CD8-positive, alpha-beta T cell (primary cell): ENCODE measurements at regions of chr7 and their contacts with region 1.

Region 1: DNA sequence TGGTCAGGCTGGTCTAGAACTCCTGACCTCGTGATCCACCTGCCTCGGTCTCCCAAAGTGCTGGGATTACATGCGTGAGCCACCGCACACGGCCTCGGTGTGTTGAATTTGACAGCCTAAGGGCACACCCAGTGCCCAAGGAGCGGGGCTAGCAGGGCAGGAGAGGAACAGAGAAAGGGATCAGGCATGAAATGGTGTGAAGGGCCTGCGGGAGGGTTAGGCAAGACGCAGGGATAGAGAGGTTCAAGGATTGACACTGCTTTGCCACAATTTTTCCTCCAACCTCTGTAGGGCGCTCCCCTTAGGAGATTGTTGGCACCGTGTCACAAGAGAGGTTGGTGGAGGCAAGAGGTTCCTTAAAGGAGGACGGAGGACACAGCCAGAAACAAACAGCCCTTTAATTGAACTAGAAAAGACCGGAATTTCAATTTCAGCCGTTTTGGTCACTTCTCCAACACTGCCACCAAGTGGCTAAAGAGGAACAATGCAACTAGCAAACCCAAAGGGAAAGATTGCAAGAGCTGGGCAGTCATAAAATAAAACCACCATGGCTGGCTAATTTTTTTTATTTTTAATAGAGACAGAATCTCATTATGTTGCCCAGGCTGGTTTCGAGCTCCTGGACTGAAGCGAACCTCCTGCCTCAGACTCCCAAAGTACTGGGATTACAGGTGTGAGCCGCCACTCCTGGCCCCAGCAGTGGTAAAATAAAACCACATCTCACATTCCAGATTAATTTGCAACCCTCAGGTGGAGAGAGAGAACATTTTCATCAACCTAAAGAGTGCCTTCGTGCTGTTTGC is 6.9 kb upstream of the CREB3L2 start:
- DNase-seq: peak in 7 of 9 experiments; percentile 9 to 71 (median 22)
- ATAC-seq: peak; percentile 77
- H3K4me3 ChIP-seq: no peak overlapping the region
- H3K4me3 Mint-ChIP-seq: no peak overlapping the region
- H3K27ac ChIP-seq: no peak overlapping the region
- H3K27ac Mint-ChIP-seq: no peak overlapping the region
- H3K4me1 ChIP-seq: no peaks in the 10 kb centered on the region
- H3K4me1 Mint-ChIP-seq: no peaks in the 10 kb centered on the region
- H3K27me3 ChIP-seq: no peaks in the 10 kb centered on the region
- H3K27me3 Mint-ChIP-seq: peaks cover 3% of the 10 kb centered on the region
- CTCF ChIP-seq: peak; percentile 96

Region 2: DNA sequence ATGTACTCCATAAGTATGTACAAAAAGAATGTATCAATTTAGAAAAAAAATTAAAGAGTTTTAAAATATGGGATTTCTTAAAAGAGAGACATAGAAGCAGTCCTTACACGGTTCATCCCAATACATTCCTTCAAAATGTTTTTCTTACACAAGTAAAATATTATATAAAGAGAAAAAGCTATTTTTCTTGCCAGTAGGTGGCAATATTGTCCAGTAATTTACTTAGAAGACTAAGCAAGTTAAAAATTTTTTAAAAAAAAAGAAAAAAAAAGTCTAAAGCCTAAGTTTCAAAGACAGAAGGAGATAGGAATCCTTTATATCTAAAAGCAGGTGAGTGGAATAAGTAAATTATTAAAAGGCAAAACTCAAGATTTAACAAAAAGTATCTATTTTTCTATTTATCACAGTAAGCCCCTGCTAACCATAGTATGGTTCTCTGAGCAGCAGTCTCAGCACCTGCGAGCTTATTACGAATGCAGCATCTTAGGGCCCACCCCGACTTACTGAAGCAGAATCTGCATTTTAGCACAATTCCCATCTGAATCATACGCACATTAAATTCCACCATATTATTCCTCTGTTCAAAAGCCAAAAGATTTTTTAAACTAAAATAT is 402.6 kb before region 1 on chr7:
- CTCF ChIA-PET with region 1: no interaction called
- POLR2A ChIA-PET with region 1: no interaction called
- intact Hi-C with region 1: loop called in 1 of 2 experiments (anchors 5 kb)
- DNase-seq: peak in 2 of 9 experiments; percentile 11 to 31
- ATAC-seq: no peak
- H3K4me3 ChIP-seq: no peak overlapping the region
- H3K4me3 Mint-ChIP-seq: no peak overlapping the region
- H3K27ac ChIP-seq: no peak overlapping the region
- H3K27ac Mint-ChIP-seq: no peak overlapping the region
- H3K4me1 ChIP-seq: no peaks in the 10 kb centered on the region
- H3K4me1 Mint-ChIP-seq: no peaks in the 10 kb centered on the region
- H3K27me3 ChIP-seq: no peaks in the 10 kb centered on the region
- H3K27me3 Mint-ChIP-seq: peaks cover 5% of the 10 kb centered on the region
- CTCF ChIP-seq: peak; percentile 40

Region 3: GRCh38 chr7:137656227-137656849 is 352.4 kb before region 1 on chr7:
- CTCF ChIA-PET with region 1: interaction called, 17 read pairs
- POLR2A ChIA-PET with region 1: no interaction called
- intact Hi-C with region 1: no loop called
- DNase-seq: peak in 8 of 9 experiments; percentile 29 to 56 (median 48)
- ATAC-seq: no peak
- H3K4me3 ChIP-seq: no peak overlapping the region
- H3K4me3 Mint-ChIP-seq: no peak overlapping the region
- H3K27ac ChIP-seq: no peak overlapping the region
- H3K27ac Mint-ChIP-seq: no peak overlapping the region
- H3K4me1 ChIP-seq: no peaks in the 10 kb centered on the region
- H3K4me1 Mint-ChIP-seq: no peaks in the 10 kb centered on the region
- H3K27me3 ChIP-seq: no peaks in the 10 kb centered on the region
- H3K27me3 Mint-ChIP-seq: peaks cover 8% of the 10 kb centered on the region
- CTCF ChIP-seq: peak; percentile 83

Region 4: DNA sequence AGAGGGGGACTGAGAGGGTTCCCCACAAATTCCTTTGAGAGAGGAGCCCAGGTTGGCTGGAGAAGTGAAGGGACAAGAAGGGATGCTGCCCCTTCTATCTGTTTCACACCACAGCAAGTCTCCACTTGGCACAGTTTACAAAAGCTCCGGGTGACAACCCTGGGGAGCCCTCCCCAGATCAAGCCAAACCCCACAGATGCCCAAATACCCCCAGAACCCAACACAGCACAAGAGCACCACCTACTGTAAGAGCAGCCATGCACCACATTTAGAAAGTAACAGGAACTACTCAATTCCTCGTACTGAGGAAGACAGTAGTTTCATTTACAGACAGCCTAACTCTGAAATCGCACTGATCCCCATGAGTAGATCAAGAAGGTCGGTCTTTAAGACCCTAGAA is 857.1 kb after region 1 on chr7:
- CTCF ChIA-PET with region 1: interaction called, 3 read pairs
- POLR2A ChIA-PET with region 1: no interaction called
- intact Hi-C with region 1: loop called (anchors 2 to 5 kb)
- DNase-seq: peak in 7 of 9 experiments; percentile 19 to 66 (median 56)
- ATAC-seq: peak; percentile 87
- H3K4me3 ChIP-seq: no peak overlapping the region
- H3K4me3 Mint-ChIP-seq: no peak overlapping the region
- H3K27ac ChIP-seq: no peak overlapping the region
- H3K27ac Mint-ChIP-seq: no peak overlapping the region
- H3K4me1 ChIP-seq: no peaks in the 10 kb centered on the region
- H3K4me1 Mint-ChIP-seq: peaks cover 4% of the 10 kb centered on the region
- H3K27me3 ChIP-seq: no peaks in the 10 kb centered on the region
- H3K27me3 Mint-ChIP-seq: peaks cover 3% of the 10 kb centered on the region
- CTCF ChIP-seq: peak; percentile 52